IMR-90 (cell line): ENCODE measurements at regions of chr14 and their contacts with region 1.

Region 1: DNA sequence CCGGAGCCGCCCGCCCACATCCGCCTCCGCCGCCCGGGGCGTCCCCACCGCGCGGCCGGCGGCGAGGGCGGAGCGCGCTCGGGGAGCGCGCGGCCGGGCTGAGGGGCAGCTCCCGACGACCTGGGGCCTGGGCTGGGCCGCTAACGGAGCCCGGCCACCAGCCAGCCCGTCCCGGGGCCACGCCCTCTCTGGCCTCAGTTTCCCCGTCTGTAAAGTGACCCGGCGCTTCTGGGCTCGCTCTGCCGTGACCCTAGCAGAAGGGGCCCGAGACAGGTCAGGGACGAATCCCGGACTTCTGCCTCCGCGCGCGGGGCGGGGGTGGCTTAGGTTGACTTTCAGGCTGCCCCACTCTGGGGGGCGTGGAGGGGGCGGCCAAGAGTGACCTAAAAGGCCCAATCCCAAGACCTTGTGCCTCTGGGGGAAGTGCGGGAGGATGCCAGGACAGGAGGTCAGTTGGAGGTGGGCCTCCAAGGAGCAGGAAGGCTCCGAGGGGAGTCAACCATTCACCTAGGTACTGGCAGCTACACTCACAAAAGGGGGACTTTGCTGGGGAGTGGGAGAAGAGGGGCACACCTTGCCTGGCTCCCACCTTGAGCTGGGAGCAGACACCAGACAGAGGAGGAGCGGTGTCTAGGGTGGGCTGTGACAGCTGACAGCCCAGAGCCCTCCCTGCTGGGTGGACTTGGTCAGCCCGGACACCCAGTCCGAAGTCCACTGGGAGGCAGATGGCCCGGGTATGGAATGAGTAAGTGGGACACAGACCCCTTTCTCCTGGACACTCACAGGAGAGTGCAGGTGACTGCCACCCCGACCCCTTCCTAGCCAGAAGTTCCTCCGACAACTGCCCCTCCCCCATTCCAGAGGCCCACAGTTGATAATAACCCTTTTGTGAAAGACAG is 489 bp upstream of the AKT1 start:
- DNase-seq: no peak
- ATAC-seq: no peak
- H3K4me3 ChIP-seq: peak overlapping the region; percentile 48
- H3K27ac ChIP-seq: peak overlapping the region; percentile 34; the same call in 1 of the 2 replicates
- H3K4me1 ChIP-seq: peaks cover 28% of the 10 kb centered on the region
- H3K27me3 ChIP-seq: no peaks in the 10 kb centered on the region
- CTCF ChIP-seq: no peak
- POLR2A ChIP-seq: 0 out of 2 replicates have a peak, but pooled peaks have one; percentile 10
- RAD21 ChIP-seq: no peak

Region 2: DNA sequence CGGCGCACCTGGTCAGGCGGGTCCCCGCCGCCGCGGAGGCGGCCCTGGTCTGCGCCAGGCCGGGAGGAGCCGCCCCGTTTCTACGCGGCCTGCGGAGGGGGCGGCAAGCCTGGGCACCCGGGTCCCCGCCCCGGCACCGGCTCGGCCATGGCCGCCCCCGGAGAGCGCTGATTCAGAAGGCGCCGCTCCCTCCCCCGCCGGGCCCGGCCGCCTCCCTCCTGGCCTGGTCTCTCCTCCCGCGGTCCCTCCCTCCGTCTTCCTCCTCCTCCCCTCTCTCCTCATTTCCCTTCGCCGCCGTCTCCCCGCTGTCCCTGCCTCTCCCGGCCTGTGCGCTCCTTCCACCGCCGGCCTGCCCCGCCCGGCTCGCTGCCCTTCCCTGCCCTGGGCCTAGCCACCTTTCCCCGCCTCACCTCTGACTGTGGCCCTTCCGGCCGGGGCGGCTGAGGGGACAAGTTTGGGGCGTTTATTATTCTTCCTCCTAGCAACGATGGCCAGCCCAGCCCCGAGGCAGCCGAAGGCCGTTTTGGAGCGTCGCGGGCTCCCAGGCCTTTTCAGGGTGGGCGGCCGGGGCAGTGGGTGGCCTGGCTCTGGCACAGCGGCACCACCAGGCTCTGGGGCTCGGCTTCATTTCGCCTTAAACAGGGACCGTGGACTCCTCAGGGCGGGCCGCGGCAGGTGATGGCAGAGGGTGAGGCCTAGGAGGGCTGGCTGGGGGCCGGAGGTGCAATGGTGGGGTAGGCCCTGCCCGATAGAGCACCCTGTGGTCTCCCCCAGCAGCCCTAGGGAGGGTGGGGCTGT is 69.8 kb after region 1 on chr14:
- CTCF ChIA-PET with region 1: no interaction called
- POLR2A ChIA-PET with region 1: no interaction called
- dilution Hi-C with region 1: no loop called
- in situ Hi-C with region 1: no loop called
- intact Hi-C with region 1: loop called (anchors 2 kb)
- DNase-seq: peak; percentile 67
- ATAC-seq: peak; percentile 88
- H3K4me3 ChIP-seq: peak overlapping the region; percentile 97
- H3K27ac ChIP-seq: peak overlapping the region; percentile 70
- H3K4me1 ChIP-seq: peaks cover 14% of the 10 kb centered on the region
- H3K27me3 ChIP-seq: peaks cover 26% of the 10 kb centered on the region
- CTCF ChIP-seq: no peak
- POLR2A ChIP-seq: peak; percentile 80
- RAD21 ChIP-seq: no peak